ENCODE measurements at regions of chr6 and their contacts with region 1.

Region 1: DNA sequence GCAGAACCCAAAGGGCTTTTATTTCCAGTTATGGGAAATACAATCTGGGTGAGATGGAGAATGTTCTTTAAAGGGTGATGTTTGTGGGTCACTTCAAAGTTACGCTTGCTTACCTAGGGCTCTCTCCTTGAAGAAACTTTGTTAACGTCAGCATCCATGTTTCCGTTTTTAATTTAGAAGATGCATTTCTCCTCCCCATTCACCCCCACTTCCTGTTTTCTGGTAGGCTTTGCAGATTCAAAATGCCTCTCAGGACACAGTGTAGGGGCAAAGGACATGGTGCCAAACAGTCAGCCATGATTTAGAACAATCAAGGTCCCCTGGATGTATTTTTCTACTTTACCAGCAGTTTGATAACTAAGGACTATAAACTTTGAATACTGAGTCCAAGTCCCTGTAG is 49.5 kb downstream of the RPS12 start:
- DNase-seq: no peak
- H3K4me3 ChIP-seq: no peak overlapping the region
- H3K27ac ChIP-seq: no peak overlapping the region
- H3K4me1 ChIP-seq: no peaks in the 10 kb centered on the region
- H3K27me3 ChIP-seq: no peaks in the 10 kb centered on the region
- CTCF ChIP-seq: no peak
- POLR2A ChIP-seq: no peak

Region 2: GRCh38 chr6:132919045-132919860 is 55.4 kb after region 1 on chr6:
- intact Hi-C with region 1: loop called (anchors 5 kb)
- DNase-seq: no peak
- H3K4me3 ChIP-seq: peak overlapping the region in 1 of 2 donors; percentile 15
- H3K27ac ChIP-seq: no peak overlapping the region
- H3K4me1 ChIP-seq: peaks cover 5% of the 10 kb centered on the region
- H3K27me3 ChIP-seq: no peaks in the 10 kb centered on the region
- CTCF ChIP-seq: no peak
- POLR2A ChIP-seq: no peak

Region 3: DNA sequence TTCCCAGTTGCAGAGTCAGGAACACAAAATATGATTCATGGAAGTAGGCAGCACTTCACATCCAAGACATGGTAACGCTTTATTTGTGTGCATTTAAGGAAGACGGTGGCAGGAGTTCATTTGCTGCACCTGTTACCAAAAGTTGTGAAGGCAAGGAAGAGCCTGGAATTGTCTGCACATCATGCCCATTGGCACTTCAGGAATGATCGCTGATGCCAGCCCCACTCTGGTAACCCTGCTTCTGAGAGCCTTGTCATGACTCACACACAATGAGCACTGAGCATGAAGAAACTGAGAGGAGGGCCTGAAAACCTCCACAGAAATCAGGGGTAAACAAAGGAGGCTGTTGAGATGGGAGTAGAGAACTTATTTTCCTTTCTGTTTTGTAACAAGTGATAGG is 131.5 kb after region 1 on chr6:
- intact Hi-C with region 1: no loop called
- DNase-seq: no peak
- H3K4me3 ChIP-seq: no peak overlapping the region
- H3K27ac ChIP-seq: no peak overlapping the region
- H3K4me1 ChIP-seq: no peaks in the 10 kb centered on the region
- H3K27me3 ChIP-seq: no peaks in the 10 kb centered on the region
- CTCF ChIP-seq: no peak
- POLR2A ChIP-seq: no peak